AG04449 (cell line): ENCODE measurements at regions of chr16 and their contacts with region 1.

Region 1: DNA sequence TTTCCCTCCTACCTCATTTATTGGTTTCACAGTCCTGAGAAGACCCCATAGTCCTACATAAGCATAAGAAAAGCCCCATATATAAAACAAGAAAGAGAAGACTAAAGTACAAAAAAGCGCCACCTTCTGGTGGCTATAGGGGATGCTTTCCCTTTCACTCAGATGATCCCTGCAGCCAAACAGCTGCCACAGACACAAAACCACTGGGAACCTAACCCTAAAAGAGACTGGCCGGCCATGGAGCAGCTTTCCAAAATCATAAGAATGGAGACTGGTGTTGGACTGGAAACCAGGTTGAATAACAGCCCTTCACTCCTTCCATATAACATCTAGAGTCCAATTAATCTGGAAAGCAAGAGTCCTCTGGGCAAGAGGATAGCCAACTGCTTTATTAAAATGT is 11.4 kb downstream of the DYNC1LI2 start:
- DNase-seq: no peak
- H3K4me3 ChIP-seq: no peak overlapping the region
- CTCF ChIP-seq: peak; percentile 44

Region 2: GRCh38 chr16:66660422-66661209 is 79.4 kb before region 1 on chr16:
- CTCF ChIA-PET with region 1: interaction called, 24 read pairs
- POLR2A ChIA-PET with region 1: interaction called, 3 read pairs
- DNase-seq: no peak
- H3K4me3 ChIP-seq: no peak overlapping the region
- CTCF ChIP-seq: peak; percentile 53

Region 3: DNA sequence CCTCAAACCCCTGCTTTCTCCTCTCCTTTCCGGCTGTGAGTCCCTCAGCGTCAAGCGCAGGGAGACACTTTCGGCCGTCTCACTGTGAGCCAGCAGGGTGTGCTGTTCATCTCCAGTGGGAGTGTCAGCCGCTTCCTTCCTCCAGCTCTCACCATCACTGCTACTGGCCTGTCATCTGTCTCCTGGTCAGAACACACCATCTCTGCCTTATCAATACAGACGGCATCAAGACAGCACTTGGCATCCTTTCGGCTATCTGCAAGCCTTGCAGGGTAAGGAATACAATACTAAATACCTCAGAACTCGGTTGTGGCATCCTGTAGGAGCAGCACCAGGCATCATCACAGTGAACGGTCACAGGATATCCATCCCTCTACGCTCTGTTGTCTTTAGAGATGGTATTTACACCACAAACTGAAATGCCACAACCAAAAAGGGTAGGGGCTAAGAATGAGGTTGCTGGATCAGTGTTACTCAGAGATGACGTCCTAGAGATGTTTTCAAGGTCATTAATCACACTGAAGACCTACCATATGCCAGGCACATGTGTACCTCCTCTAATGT is 22.8 kb before region 1 on chr16:
- CTCF ChIA-PET with region 1: interaction called, 37 read pairs
- POLR2A ChIA-PET with region 1: interaction called, 3 read pairs
- DNase-seq: peak; percentile 42
- H3K4me3 ChIP-seq: no peak overlapping the region
- CTCF ChIP-seq: peak; percentile 94

Region 4: GRCh38 chr16:66728117-66728787 is 11.8 kb before region 1 on chr16:
- CTCF ChIA-PET with region 1: interaction called, 501 read pairs
- POLR2A ChIA-PET with region 1: interaction called, 3 read pairs
- DNase-seq: no peak
- H3K4me3 ChIP-seq: no peak overlapping the region
- CTCF ChIP-seq: peak; percentile 51

Region 5: GRCh38 chr16:66758086-66758485 is 18.1 kb after region 1 on chr16:
- CTCF ChIA-PET with region 1: interaction called, 501 read pairs
- POLR2A ChIA-PET with region 1: no interaction called
- DNase-seq: no peak
- H3K4me3 ChIP-seq: no peak overlapping the region
- CTCF ChIP-seq: no peak